Dendritic cell treated with granulocyte-macrophage colony-stimulating factor and Interleukin-4, amounts not matched to agents 40 ng/mL and 50 ng/mL, for 4 days (primary cell): ENCODE measurements at regions of chr2 and their contacts with region 1.

Region 1: GRCh38 chr2:7363906-7364305 is 446.7 kb downstream of the RNF144A start:
- H3K4me3 Mint-ChIP-seq: no peak overlapping the region
- H3K27ac Mint-ChIP-seq: no peak overlapping the region
- H3K4me1 Mint-ChIP-seq: no peaks in the 10 kb centered on the region
- H3K27me3 Mint-ChIP-seq: no peaks in the 10 kb centered on the region

Region 2: GRCh38 chr2:7203055-7203467 is 160.8 kb before region 1 on chr2:
- intact Hi-C with region 1: loop called (anchors 10 kb)
- H3K4me3 Mint-ChIP-seq: no peak overlapping the region
- H3K27ac Mint-ChIP-seq: no peak overlapping the region
- H3K4me1 Mint-ChIP-seq: peaks cover 13% of the 10 kb centered on the region
- H3K27me3 Mint-ChIP-seq: peaks cover 2% of the 10 kb centered on the region